Esophagus muscularis mucosa (tissue), 4 donors: ENCODE measurements at regions of chr15 and their contacts with region 1.

Region 1: GRCh38 chr15:96356494-96357455 is 26.3 kb downstream of the NR2F2 start:
- DNase-seq: no peak
- H3K4me3 ChIP-seq: peak overlapping the region; percentile 69 to 84 (median 80)
- H3K27ac ChIP-seq: peak overlapping the region; percentile 94 to 97 (median 94)
- H3K4me1 ChIP-seq: peaks cover 39 to 91% (median 78%) of the 10 kb centered on the region in 4 donors
- H3K27me3 ChIP-seq: peaks cover 0 to 17% (median 0%) of the 10 kb centered on the region in 4 donors
- CTCF ChIP-seq: peak; percentile 96 to 100 (median 99)
- EP300 ChIP-seq: no peak
- POLR2A ChIP-seq: no peak

Region 2: GRCh38 chr15:95259513-95259912 is 1097.3 kb before region 1 on chr15:
- intact Hi-C with region 1: loop called (anchors 10 kb)
- DNase-seq: no peak
- H3K4me3 ChIP-seq: no peak overlapping the region
- H3K27ac ChIP-seq: peak overlapping the region in 2 of 4 donors; percentile 14 to 18
- H3K4me1 ChIP-seq: peaks cover 0 to 40% (median 40%) of the 10 kb centered on the region in 4 donors
- H3K27me3 ChIP-seq: no peaks in the 10 kb centered on the region
- CTCF ChIP-seq: peak; percentile 76 to 81 (median 79)
- EP300 ChIP-seq: no peak
- POLR2A ChIP-seq: no peak

Region 3: GRCh38 chr15:96428742-96429141 is 72.0 kb after region 1 on chr15:
- intact Hi-C with region 1: loop called (anchors 5 kb)
- DNase-seq: no peak
- H3K4me3 ChIP-seq: no peak overlapping the region
- H3K27ac ChIP-seq: peak overlapping the region; percentile 3 to 63 (median 53)
- H3K4me1 ChIP-seq: peaks cover 7 to 14% (median 13%) of the 10 kb centered on the region in 4 donors
- H3K27me3 ChIP-seq: no peaks in the 10 kb centered on the region
- CTCF ChIP-seq: no peak
- EP300 ChIP-seq: no peak
- POLR2A ChIP-seq: no peak

Region 4: DNA sequence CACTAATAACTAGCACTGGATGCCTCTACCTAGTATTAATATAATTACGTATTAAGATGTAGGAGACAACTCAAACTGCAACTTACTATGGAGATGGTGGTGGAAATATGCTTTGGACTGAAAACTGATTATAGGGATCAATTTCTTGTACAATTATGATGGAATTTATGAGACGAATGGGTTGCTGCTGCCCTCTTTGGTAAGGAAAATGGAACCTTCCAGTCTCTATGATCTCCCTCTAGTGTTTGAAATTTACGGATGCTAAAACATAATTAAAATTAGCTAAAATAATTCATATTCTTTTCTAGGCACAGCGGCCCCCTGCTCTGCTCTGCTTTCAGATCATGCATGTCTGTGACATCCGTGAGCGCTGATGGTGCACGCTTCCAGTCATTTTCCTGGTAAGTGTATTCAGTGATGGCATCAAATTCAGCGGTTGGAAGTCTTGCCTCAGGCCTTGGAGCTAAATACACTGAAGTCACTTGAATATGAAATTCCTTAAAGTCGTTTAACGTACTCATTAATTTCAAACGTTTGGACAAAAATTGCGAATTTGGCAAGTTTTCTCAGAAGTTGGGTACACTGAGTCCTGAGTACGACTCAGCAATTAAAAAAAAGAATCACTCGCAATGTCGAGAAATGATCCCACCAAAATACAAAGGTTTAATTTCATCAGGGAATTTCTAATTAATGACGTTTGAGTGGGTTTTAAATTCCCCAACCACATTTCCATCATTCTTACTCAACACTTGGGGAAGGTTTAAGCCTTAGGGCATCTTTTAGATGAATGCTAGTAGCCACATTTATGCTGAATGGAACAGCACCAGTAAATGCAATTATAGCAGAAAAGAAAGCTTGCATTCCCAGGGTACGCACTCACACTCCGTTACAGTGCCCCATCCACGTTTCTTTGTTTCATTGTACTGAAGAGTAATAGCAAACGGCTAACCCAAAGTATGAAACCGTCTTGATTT is 106.3 kb after region 1 on chr15:
- intact Hi-C with region 1: loop called (anchors 2 kb)
- DNase-seq: no peak
- H3K4me3 ChIP-seq: no peak overlapping the region
- H3K27ac ChIP-seq: no peak overlapping the region
- H3K4me1 ChIP-seq: no peaks in the 10 kb centered on the region
- H3K27me3 ChIP-seq: no peaks in the 10 kb centered on the region
- CTCF ChIP-seq: peak in 2 of 3 experiments; percentile 19 to 31
- EP300 ChIP-seq: no peak
- POLR2A ChIP-seq: no peak

Region 5: DNA sequence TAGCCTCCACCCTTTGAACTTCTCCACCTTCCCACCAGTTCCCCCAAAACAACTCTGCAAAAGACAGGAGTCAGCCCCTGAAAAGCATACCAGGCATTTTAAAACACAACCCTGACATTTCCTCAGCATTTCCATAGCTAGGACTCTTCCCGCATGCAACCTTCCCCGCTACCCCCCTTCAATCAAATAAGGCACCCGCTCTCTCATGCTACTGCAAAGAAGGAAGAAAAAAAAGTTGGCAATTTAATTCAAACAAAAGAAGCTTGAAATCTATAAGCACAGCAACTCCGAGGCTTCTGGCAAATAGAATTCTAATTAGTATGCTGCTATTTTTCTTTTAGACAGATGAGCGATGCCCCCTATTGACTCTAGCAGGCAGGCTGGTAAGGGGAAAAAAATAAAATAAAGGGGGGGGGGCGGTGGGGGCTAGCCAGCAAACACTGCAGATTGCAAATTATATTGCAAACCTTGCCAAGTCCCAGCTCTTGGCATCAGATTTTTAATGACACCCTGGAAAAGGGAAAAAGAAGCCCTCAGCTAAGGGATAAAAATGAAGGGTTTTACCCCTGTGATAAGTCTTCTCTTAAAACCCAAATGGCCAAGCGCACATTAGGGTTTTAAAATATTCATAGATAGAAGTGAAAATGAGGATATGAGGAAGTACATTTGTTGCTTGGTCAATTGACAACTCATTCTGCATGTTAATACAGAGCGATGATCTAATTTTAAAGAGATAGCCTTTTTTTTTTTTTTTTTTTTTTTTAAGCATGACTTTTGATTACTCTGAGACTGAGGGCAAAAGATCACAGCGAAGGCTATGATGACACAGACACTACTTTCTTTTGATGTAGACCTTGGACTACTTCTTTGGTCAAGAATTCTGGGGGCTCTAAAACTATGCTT is 229.0 kb after region 1 on chr15:
- intact Hi-C with region 1: loop called (anchors 5 kb)
- DNase-seq: no peak
- H3K4me3 ChIP-seq: no peak overlapping the region
- H3K27ac ChIP-seq: no peak overlapping the region
- H3K4me1 ChIP-seq: peaks cover 0 to 5% (median 0%) of the 10 kb centered on the region in 4 donors
- H3K27me3 ChIP-seq: no peaks in the 10 kb centered on the region
- CTCF ChIP-seq: peak in 2 of 3 experiments; percentile 25 to 32
- EP300 ChIP-seq: no peak
- POLR2A ChIP-seq: no peak

Region 6: DNA sequence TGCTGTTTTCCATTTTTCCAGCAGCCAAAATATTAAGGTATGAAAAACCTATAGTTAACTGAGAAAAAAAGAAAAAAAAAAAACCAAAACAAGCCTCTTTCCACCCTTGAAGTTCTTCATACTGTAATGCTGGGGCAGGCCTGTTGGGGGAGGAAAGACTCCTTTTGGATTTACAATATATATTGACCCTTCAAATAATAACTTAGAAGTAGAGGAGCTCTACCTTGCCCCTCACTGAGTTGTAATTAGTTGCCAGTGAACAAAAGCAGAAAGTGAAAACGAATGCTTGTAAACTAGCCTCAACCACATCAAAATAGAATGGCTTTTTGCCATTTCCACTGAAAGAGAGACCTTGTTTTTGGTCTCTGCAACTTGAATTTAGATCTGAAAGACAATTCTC is 300.3 kb after region 1 on chr15:
- intact Hi-C with region 1: no loop called
- DNase-seq: no peak
- H3K4me3 ChIP-seq: no peak overlapping the region
- H3K27ac ChIP-seq: no peak overlapping the region
- H3K4me1 ChIP-seq: no peaks in the 10 kb centered on the region
- H3K27me3 ChIP-seq: no peaks in the 10 kb centered on the region
- CTCF ChIP-seq: no peak
- EP300 ChIP-seq: no peak
- POLR2A ChIP-seq: no peak

Region 7: GRCh38 chr15:96756146-96756545 is 399.4 kb after region 1 on chr15:
- intact Hi-C with region 1: no loop called
- DNase-seq: peak; percentile 14
- H3K4me3 ChIP-seq: no peak overlapping the region
- H3K27ac ChIP-seq: no peak overlapping the region
- H3K4me1 ChIP-seq: no peaks in the 10 kb centered on the region
- H3K27me3 ChIP-seq: no peaks in the 10 kb centered on the region
- CTCF ChIP-seq: no peak
- EP300 ChIP-seq: no peak
- POLR2A ChIP-seq: no peak

Region 8: DNA sequence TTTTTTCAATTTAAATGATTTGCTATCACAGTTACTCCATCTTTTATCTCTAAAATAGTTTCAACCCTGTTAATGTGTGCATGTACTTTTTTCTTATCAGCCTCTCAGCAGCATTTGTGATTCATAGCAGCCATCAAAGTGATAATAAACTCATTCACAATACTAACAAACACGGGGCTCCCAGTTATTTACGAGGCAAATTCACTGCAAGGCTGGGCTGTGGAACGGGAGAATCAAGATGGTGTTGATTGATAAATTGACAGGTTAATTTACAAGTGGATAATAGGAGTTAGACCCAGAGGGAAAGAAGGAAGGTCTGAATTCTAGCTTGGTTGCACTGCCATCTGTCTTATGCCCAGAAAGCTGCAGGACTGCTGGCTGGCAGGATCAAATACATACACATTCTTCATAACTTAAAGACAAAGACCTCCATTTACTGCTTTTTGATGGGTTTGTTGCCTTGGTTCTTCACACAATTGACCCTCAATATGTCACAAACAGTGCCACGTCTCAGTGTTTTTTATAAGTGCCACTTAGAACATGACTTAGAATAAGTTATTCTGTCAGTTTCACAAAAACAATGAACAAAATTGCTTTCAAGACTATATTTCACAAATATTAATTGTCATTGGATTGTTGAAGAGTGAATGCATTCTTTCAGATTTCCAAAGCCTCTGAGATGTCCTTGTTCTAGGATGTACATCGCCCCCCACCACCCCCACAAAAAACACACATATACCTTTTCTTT is 536.6 kb after region 1 on chr15:
- intact Hi-C with region 1: loop called (anchors 5 kb)
- DNase-seq: no peak
- H3K4me3 ChIP-seq: no peak overlapping the region
- H3K27ac ChIP-seq: peak overlapping the region in 1 of 4 donors; percentile 22
- H3K4me1 ChIP-seq: peaks cover 0 to 24% (median 17%) of the 10 kb centered on the region in 4 donors
- H3K27me3 ChIP-seq: no peaks in the 10 kb centered on the region
- CTCF ChIP-seq: peak; percentile 63 to 77 (median 68)
- EP300 ChIP-seq: no peak
- POLR2A ChIP-seq: no peak

Region 9: GRCh38 chr15:97234851-97235610 is 878.3 kb after region 1 on chr15:
- intact Hi-C with region 1: loop called (anchors 10 kb)
- DNase-seq: peak; percentile 92
- H3K4me3 ChIP-seq: peak overlapping the region in 3 of 4 donors; percentile 7 to 29 (median 8)
- H3K27ac ChIP-seq: no peak overlapping the region
- H3K4me1 ChIP-seq: peaks cover 0 to 8% (median 2%) of the 10 kb centered on the region in 4 donors
- H3K27me3 ChIP-seq: no peaks in the 10 kb centered on the region
- CTCF ChIP-seq: peak; percentile 81 to 92 (median 84)
- EP300 ChIP-seq: no peak
- POLR2A ChIP-seq: no peak